Dorsolateral prefrontal cortex (tissue), 120 donors: ENCODE measurements at regions of chr3 and their contacts with region 1.

Region 1: GRCh38 chr3:107740992-107741896 is 218.5 kb downstream of the BBX start:
- DNase-seq: no peak
- H3K4me3 ChIP-seq: no peak overlapping the region
- H3K27ac ChIP-seq: peak overlapping the region in 7 of 59 donors; percentile 2 to 34 (median 12)
- H3K27me3 ChIP-seq: no peaks in the 10 kb centered on the region
- CTCF ChIP-seq: peak; percentile 58 to 88 (median 72)

Region 2: GRCh38 chr3:107574650-107575049 is 166.6 kb before region 1 on chr3:
- intact Hi-C with region 1: loop called in 1 of 2 experiments (anchors 5 kb)
- DNase-seq: no peak
- H3K4me3 ChIP-seq: no peak overlapping the region
- H3K27ac ChIP-seq: no peak overlapping the region
- H3K27me3 ChIP-seq: no peaks in the 10 kb centered on the region
- CTCF ChIP-seq: peak; percentile 30 to 79 (median 62)

Region 3: DNA sequence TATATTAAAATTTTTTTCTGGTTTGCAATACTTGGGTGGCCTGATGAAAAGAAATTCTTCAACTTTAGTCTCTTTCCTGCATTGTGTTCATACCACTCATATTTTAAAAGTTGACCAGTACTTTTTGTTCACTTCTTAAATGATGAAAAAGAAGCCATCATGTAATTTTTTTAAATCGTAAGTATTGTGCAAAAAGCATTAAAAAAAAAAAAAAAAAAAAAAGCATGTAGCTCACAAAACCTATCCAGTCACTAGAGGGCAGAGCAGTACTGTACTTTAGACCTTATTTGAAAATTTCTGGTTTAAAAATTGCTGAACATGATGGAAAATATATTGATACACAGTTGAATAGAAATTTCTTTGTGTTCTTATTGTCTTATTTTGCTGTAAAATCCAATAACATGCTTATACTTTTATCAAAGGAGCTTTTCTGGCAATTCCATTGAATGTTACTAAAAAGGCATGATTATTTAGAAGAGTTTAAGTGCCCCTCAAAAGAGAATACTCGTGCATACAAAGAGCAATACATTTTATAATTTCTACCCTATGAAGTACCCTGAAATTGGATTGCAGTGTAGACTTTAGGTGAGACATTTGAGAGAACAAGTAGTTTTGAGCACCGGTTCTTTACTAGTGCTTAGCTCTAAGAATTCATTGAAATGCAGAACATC is 80.8 kb before region 1 on chr3:
- intact Hi-C with region 1: loop called in 1 of 2 experiments (anchors 5 kb)
- DNase-seq: no peak
- H3K4me3 ChIP-seq: peak overlapping the region in 10 of 59 donors; percentile 1 to 24 (median 12)
- H3K27ac ChIP-seq: no peak overlapping the region
- H3K27me3 ChIP-seq: no peaks in the 10 kb centered on the region
- CTCF ChIP-seq: peak; percentile 49 to 84 (median 70)

Region 4: DNA sequence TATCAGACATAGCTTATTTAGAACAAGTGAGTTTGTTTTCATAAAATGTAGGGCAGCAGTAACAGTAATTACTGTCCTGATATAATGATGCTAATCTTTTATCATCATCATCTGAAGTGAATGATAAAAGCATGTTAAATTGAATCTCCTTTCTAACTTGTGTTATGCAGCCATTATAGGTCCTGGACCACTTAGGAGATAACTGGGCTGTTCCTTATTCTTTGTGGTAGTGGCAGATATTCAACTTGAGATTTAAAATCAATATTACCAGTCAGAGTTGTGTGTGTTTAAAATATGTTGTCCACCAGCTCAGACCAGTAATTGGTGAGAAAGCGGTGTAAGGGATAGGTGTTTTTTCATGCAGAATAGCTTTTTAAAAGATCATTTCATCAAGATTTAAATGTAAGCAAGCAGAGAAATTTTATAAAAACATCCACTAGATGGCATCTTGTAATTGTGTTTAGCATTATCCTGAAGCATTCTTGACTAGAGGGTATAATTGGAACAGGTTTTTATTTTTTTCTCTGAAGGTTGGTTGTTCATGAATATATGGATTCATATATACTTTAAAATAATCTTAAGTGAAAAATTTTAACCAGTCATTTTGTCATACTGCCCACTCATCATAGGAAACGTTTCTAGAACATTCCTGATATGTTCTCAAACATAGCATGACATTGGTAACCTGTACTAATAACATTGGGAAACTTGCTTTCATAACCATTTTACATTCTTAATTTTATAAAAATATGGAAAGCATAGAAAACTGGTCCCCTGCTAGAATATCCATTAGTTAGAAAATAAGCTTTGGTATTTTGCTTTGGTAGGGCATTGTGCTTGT is 64.6 kb before region 1 on chr3:
- intact Hi-C with region 1: loop called (anchors 5 kb)
- DNase-seq: no peak
- H3K4me3 ChIP-seq: no peak overlapping the region
- H3K27ac ChIP-seq: peak overlapping the region in 9 of 59 donors; percentile 1 to 75 (median 55)
- H3K27me3 ChIP-seq: no peaks in the 10 kb centered on the region
- CTCF ChIP-seq: peak; percentile 44 to 90 (median 74)